ENCODE measurements at regions of chr19 and their contacts with region 1.

Region 1: DNA sequence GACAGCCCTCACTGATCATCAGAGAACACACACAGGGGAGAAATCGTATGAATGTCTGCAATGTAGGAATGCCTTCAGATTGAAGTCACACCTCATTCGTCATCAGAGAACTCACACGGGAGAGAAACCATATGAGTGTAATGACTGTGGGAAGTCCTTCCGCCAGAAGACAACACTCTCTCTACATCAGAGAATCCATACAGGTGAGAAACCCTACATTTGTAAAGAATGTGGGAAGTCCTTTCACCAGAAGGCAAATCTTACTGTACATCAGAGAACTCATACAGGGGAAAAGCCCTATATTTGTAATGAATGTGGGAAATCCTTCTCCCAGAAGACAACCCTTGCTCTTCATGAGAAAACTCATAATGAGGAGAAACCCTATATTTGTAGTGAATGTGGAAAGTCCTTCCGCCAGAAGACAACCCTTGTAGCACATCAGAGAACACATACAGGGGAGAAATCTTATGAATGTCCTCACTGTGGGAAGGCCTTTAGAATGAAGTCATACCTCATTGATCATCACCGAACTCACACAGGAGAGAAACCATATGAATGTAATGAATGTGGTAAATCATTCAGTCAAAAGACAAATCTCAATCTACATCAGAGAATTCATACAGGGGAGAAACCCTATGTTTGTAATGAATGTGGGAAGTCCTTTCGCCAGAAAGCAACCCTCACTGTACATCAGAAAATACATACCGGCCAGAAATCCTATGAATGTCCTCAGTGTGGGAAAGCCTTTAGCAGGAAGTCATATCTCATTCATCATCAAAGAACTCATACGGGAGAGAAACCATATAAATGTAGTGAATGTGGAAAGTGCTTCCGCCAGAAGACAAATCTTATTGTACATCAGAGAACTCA is 32.5 kb downstream of the ZNF567 start:
- DNase-seq: no peak
- ATAC-seq: no peak
- H3K4me3 ChIP-seq: peak overlapping the region; percentile 27
- H3K27ac ChIP-seq: no peak overlapping the region
- H3K4me1 ChIP-seq: no peaks in the 10 kb centered on the region
- H3K27me3 ChIP-seq: no peaks in the 10 kb centered on the region

Region 2: GRCh38 chr19:36638862-36639510 is 80.9 kb before region 1 on chr19:
- intact Hi-C with region 1: loop called in 1 of 4 experiments (anchors 10 kb)
- DNase-seq: no peak
- ATAC-seq: no peak
- H3K4me3 ChIP-seq: no peak overlapping the region
- H3K27ac ChIP-seq: no peak overlapping the region
- H3K4me1 ChIP-seq: no peaks in the 10 kb centered on the region
- H3K27me3 ChIP-seq: no peaks in the 10 kb centered on the region